ENCODE measurements at regions of chr20 and their contacts with region 1.

Region 1: GRCh38 chr20:38255393-38255792 is 5.1 kb downstream of the KIAA1755 start:
- DNase-seq: peak in 1 of 2 donors; percentile 78
- H3K4me3 ChIP-seq: no peak overlapping the region
- H3K27ac ChIP-seq: peak overlapping the region; percentile 84 to 93
- H3K4me1 ChIP-seq: peaks cover 7 to 46% of the 10 kb centered on the region in 2 donors
- H3K27me3 ChIP-seq: no peaks in the 10 kb centered on the region
- CTCF ChIP-seq: no peak

Region 2: GRCh38 chr20:38270869-38271605 is 15.6 kb after region 1 on chr20:
- intact Hi-C with region 1: loop called (anchors 1 kb)
- DNase-seq: peak in 1 of 2 donors; percentile 91
- H3K4me3 ChIP-seq: peak overlapping the region in 1 of 2 donors; percentile 43
- H3K27ac ChIP-seq: peak overlapping the region; percentile 63 to 80
- H3K4me1 ChIP-seq: peaks cover 7 to 28% of the 10 kb centered on the region in 2 donors
- H3K27me3 ChIP-seq: no peaks in the 10 kb centered on the region
- CTCF ChIP-seq: no peak

Region 3: GRCh38 chr20:38748097-38748860 is 492.9 kb after region 1 on chr20 and contains the start of gene ACTR5:
- intact Hi-C with region 1: loop called (anchors 10 kb)
- DNase-seq: peak; percentile 50 to 94
- H3K4me3 ChIP-seq: peak within 1 kb of the TSS; percentile 79 to 82
- H3K27ac ChIP-seq: peak within 1 kb of the TSS; percentile 87 to 91
- H3K4me1 ChIP-seq: peaks cover 0 to 4% of the 10 kb centered on the region in 2 donors
- H3K27me3 ChIP-seq: no peaks in the 10 kb centered on the region
- CTCF ChIP-seq: no peak
- total RNA-seq, gene ACTR5: 5.9 TPM

Measured in ascending aorta (tissue), 2 donors.